K562 (cell line): ENCODE measurements at regions of chr6 and their contacts with region 1.

Region 1: GRCh38 chr6:90285611-90286381 is 10.8 kb downstream of the BACH2 start:
- DNase-seq: peak; percentile 43 to 90 (median 64)
- ATAC-seq: peak; percentile 97
- H3K4me3 ChIP-seq: no peak overlapping the region
- H3K27ac ChIP-seq: peak overlapping the region; percentile 17; the same call in 1 of the 3 replicates
- H3K4me1 ChIP-seq: peaks cover 3 to 22% of the 10 kb centered on the region in 2 experiments; a peak in 4 of 5 replicates
- H3K27me3 ChIP-seq: no peaks in the 10 kb centered on the region
- CTCF ChIP-seq: no peak
- EP300 ChIP-seq: peak; percentile 46; the same call in 1 of the 2 replicates
- POLR2A ChIP-seq: no peak
- RAD21 ChIP-seq: peak in 1 of 2 experiments; percentile 33; a peak in 2 of 4 replicates

Region 2: GRCh38 chr6:89940225-89941027 is 345.4 kb before region 1 on chr6:
- CTCF ChIA-PET with region 1: no interaction called
- POLR2A ChIA-PET with region 1: no interaction called
- in situ Hi-C with region 1: no loop called
- intact Hi-C with region 1: loop called (anchors 2 kb)
- DNase-seq: peak; percentile 54 to 79 (median 64)
- ATAC-seq: peak; percentile 99
- H3K4me3 ChIP-seq: no peak overlapping the region
- H3K27ac ChIP-seq: no peak overlapping the region
- H3K4me1 ChIP-seq: no peaks in the 10 kb centered on the region
- H3K27me3 ChIP-seq: peaks cover 0 to 13% of the 10 kb centered on the region in 2 experiments; a peak in 1 of 5 replicates
- CTCF ChIP-seq: peak; percentile 77 to 86 (median 82)
- EP300 ChIP-seq: 0 out of 2 replicates have a peak, but pooled peaks have one; percentile 16
- POLR2A ChIP-seq: no peak
- RAD21 ChIP-seq: peak; percentile 90 to 96

Region 3: GRCh38 chr6:89970609-89971337 is 315.0 kb before region 1 on chr6:
- CTCF ChIA-PET with region 1: interaction called, 3 read pairs
- POLR2A ChIA-PET with region 1: no interaction called
- in situ Hi-C with region 1: no loop called
- intact Hi-C with region 1: loop called (anchors 2 kb)
- DNase-seq: peak; percentile 51 to 69 (median 53)
- ATAC-seq: peak; percentile 93
- H3K4me3 ChIP-seq: no peak overlapping the region
- H3K27ac ChIP-seq: no peak overlapping the region
- H3K4me1 ChIP-seq: peaks cover 3% of the 10 kb centered on the region in 2 experiments; a peak in 1 of 5 replicates
- H3K27me3 ChIP-seq: peaks cover 0 to 11% of the 10 kb centered on the region in 2 experiments; a peak in 1 of 5 replicates
- CTCF ChIP-seq: peak; percentile 62 to 76 (median 62); a peak in 5 of 6 replicates
- EP300 ChIP-seq: no peak
- POLR2A ChIP-seq: no peak
- RAD21 ChIP-seq: peak; percentile 83 to 89

Region 4: GRCh38 chr6:90146921-90147649 is 138.7 kb before region 1 on chr6:
- CTCF ChIA-PET with region 1: no interaction called
- POLR2A ChIA-PET with region 1: no interaction called
- in situ Hi-C with region 1: no loop called
- intact Hi-C with region 1: no loop called
- DNase-seq: no peak
- ATAC-seq: no peak
- H3K4me3 ChIP-seq: no peak overlapping the region
- H3K27ac ChIP-seq: no peak overlapping the region
- H3K4me1 ChIP-seq: no peaks in the 10 kb centered on the region
- H3K27me3 ChIP-seq: peaks cover 0 to 12% of the 10 kb centered on the region in 2 experiments; a peak in 1 of 5 replicates
- CTCF ChIP-seq: no peak
- EP300 ChIP-seq: no peak
- POLR2A ChIP-seq: no peak
- RAD21 ChIP-seq: 0 out of 4 replicates have a peak, but pooled peaks of 1 of the 2 experiments have one; percentile 6

Region 5: GRCh38 chr6:90179190-90180169 is 106.3 kb before region 1 on chr6:
- CTCF ChIA-PET with region 1: no interaction called
- POLR2A ChIA-PET with region 1: no interaction called
- in situ Hi-C with region 1: no loop called
- intact Hi-C with region 1: loop called (anchors 10 kb)
- DNase-seq: peak in 1 of 4 experiments; percentile 30
- ATAC-seq: no peak
- H3K4me3 ChIP-seq: no peak overlapping the region
- H3K27ac ChIP-seq: no peak overlapping the region
- H3K4me1 ChIP-seq: peaks cover 0 to 9% of the 10 kb centered on the region in 2 experiments; a peak in 2 of 5 replicates
- H3K27me3 ChIP-seq: 0 out of 5 replicates have a peak, but pooled peaks cover 0 to 4% of the 10 kb centered on the region in 2 experiments
- CTCF ChIP-seq: peak; percentile 38 to 41 (median 41); a peak in 3 of 6 replicates
- EP300 ChIP-seq: no peak
- POLR2A ChIP-seq: no peak
- RAD21 ChIP-seq: peak; percentile 48 to 60

Region 6: DNA sequence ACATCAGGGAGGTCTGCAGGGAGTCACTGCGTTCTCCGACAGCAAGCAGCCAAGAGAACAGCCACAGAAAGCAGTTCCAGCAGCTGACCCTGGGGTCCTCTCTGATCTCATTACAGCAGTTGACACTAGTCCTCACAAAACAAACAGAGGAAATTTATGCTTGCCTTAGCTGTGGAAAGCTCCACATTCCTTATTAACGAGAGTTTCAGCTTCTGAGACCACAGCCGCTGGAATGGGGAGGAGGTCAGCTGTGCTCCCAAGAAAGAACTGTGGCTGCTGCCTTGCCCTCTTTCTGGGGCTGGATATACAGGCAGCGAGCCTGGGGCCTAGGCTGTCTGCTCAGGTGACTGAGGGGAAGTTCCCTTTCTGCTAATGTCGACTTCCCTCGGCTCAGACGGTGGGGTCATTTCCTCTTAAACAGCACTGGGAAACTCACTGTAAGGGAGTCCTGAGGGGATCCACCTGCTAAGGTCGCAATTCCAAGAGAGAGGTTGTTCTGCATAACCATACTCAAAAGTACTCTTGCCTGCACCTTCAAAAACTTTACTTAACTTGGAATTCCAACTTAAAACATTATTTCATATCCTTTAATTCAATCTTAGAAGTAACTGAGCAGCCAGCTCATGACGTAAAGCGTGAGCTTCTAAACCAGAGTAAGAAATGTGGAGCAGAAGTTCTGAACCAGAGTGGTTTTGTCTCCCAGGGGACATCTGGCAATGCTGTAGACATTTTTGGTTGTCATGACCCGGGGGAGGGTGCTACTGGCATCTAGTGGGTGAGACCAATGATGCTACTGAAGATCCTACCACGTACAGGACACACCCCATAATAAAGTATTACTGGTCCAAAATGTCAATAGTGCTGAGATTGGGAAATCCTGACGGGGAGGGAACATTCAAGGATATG is 69.5 kb before region 1 on chr6:
- CTCF ChIA-PET with region 1: no interaction called
- POLR2A ChIA-PET with region 1: no interaction called
- in situ Hi-C with region 1: no loop called
- intact Hi-C with region 1: loop called (anchors 5 kb)
- DNase-seq: no peak
- ATAC-seq: no peak
- H3K4me3 ChIP-seq: no peak overlapping the region
- H3K27ac ChIP-seq: no peak overlapping the region
- H3K4me1 ChIP-seq: peaks cover 4 to 24% of the 10 kb centered on the region in 2 experiments; a peak in 4 of 5 replicates
- H3K27me3 ChIP-seq: no peaks in the 10 kb centered on the region
- CTCF ChIP-seq: no peak
- EP300 ChIP-seq: no peak
- POLR2A ChIP-seq: no peak
- RAD21 ChIP-seq: no peak

Region 7: GRCh38 chr6:90393232-90393884 is 107.6 kb after region 1 on chr6:
- CTCF ChIA-PET with region 1: no interaction called
- POLR2A ChIA-PET with region 1: no interaction called
- in situ Hi-C with region 1: no loop called
- intact Hi-C with region 1: loop called (anchors 2 kb)
- DNase-seq: peak; percentile 44 to 79 (median 50)
- ATAC-seq: peak; percentile 89
- H3K4me3 ChIP-seq: no peak overlapping the region
- H3K27ac ChIP-seq: no peak overlapping the region
- H3K4me1 ChIP-seq: peaks cover 7 to 14% of the 10 kb centered on the region in 2 experiments; a peak in 3 of 5 replicates
- H3K27me3 ChIP-seq: no peaks in the 10 kb centered on the region; a peak in 1 of 5 replicates
- CTCF ChIP-seq: peak; percentile 72 to 80 (median 79)
- EP300 ChIP-seq: no peak
- POLR2A ChIP-seq: no peak
- RAD21 ChIP-seq: peak; percentile 71 to 89

Region 8: GRCh38 chr6:90586836-90587638 is 301.2 kb after region 1 on chr6 and contains the start of gene MAP3K7:
- CTCF ChIA-PET with region 1: no interaction called
- POLR2A ChIA-PET with region 1: no interaction called
- in situ Hi-C with region 1: no loop called
- intact Hi-C with region 1: loop called (anchors 10 kb)
- DNase-seq: peak; percentile 79 to 96 (median 84)
- ATAC-seq: peak; percentile 93
- H3K4me3 ChIP-seq: peak within 1 kb of the TSS; percentile 98
- H3K27ac ChIP-seq: peak within 1 kb of the TSS; percentile 97
- H3K4me1 ChIP-seq: peaks cover 0 to 13% of the 10 kb centered on the region in 2 experiments; a peak in 4 of 5 replicates
- H3K27me3 ChIP-seq: no peaks in the 10 kb centered on the region
- CTCF ChIP-seq: peak in 1 of 3 experiments; percentile 1; a peak in 1 of 6 replicates
- EP300 ChIP-seq: peak; percentile 59
- POLR2A ChIP-seq: peak; percentile 92
- RAD21 ChIP-seq: no peak; a peak in 1 of 4 replicates
- polyA plus RNA-seq, gene MAP3K7: 13.4 to 13.8 TPM